Dorsolateral prefrontal cortex (tissue), 120 donors: ENCODE measurements at regions of chr17 and their contacts with region 1.

Region 1: DNA sequence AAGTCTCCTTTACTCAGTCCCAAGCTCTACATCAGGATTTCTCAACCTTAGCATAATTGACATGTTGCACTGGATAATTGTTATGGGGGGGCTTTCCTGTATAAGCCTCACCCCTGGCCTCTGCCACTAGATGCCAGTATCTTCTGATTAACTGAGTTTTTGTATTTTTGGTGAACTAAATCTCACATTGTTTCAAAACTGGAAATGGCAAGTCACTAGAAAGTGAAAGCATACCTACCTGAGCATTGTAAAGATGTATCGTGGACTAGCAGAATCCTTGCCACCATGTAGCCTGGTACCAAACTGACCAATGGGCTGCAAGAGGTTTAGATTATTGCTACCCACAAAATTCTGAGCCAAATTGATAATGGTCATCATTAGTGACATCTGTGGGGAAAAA is 15.0 kb downstream of the TOP2A start:
- DNase-seq: no peak
- H3K4me3 ChIP-seq: no peak overlapping the region
- H3K27ac ChIP-seq: no peak overlapping the region
- H3K27me3 ChIP-seq: peaks cover 0 to 4% (median 0%) of the 10 kb centered on the region in 45 donors
- CTCF ChIP-seq: no peak

Region 2: DNA sequence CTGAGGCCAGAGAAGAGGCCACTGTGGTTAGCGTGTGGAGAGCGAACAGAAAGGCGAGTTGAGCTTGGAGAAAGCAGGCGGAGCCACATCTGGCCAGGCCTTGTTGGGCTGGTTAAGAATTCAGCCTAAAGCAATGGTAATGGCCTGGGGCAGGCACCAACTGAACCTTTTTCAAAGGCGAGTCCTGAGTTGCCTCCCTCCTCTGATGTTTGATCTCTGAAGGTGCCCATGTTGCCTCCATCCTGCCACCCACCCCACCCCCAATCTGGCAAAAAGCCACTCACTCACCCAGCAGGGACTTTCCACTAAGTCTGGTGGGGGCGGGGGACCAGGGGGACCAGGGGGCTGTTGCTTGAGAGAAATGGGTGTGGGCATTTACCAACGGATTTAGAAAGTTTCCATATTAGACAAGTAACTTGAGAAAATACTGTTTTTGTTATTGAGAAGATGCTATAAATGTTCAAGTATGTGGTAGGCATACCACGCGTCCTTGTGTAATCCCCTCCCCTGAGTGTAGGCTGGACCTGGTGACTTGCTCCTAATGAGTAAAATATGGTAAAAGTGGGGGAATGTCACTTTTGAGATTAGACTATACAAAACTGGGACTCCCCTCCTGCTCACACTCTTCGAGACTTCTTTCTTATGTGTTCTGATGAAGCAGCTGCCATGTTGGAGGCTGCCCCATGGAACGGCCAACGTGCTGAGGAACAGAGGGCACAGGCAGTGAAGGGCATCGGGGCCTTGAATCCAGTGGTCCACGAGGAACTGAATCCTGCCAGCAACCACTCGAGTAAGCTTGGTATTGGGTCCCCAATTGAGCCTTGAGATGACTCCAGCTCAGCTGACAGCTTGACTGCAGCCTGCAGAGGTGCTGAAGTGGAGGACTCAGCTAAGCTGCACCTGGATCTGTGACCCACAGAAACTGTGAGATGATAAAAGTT is 128.7 kb after region 1 on chr17:
- intact Hi-C with region 1: loop called in 1 of 2 experiments (anchors 5 kb)
- DNase-seq: peak in 1 of 10 donors; percentile 14
- H3K4me3 ChIP-seq: no peak overlapping the region
- H3K27ac ChIP-seq: no peak overlapping the region
- H3K27me3 ChIP-seq: peaks cover 0 to 4% (median 0%) of the 10 kb centered on the region in 45 donors
- CTCF ChIP-seq: no peak

Region 3: DNA sequence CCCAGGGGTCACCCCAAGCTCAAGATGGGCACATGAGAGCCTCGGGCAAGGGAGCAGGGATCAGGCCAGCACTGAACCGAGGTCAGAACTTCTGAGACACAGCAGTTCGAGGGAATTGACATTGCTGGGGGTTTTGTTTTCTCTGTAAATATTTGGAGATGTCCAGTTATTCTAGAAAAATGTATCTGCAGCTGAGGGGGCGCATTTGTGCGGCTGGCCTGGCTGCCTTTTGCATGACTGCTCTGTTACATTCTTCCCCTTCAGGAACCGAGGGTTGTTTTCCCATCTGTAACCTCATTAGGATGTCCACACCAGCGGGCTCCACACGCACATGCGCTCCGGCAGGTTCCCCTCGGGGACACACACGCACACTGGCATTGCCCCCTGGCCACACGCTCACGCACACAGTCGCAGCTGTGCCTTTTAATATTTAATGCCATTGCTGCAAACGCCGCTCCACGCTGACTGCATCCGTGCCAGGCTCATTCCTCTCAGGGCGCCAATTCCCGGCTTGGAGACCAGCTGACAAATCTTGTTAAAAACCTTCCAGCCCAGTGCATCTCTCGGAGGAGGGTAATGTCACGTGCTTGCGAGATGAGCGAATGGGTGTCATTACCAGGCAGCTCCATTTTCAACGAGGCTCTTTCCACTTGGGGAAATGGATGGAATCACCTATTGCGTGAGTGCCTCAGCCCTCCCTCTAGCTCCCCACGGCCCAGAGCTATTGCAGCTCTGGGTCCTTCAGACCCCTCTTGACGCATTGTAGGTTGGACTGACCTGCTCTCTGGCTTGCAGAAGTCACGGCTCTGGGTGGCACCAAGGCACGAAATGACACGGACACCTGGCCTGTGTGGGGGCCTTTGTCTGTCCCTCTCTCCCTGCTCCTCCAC is 149.5 kb after region 1 on chr17:
- intact Hi-C with region 1: no loop called
- DNase-seq: peak in 7 of 10 donors; percentile 52 to 80 (median 64)
- H3K4me3 ChIP-seq: peak overlapping the region in 20 of 59 donors; percentile 8 to 40 (median 18)
- H3K27ac ChIP-seq: peak overlapping the region; percentile 62 to 100 (median 93)
- H3K27me3 ChIP-seq: no peaks in the 10 kb centered on the region
- CTCF ChIP-seq: peak in 3 of 56 donors; percentile 13 to 19 (median 15)